ENCODE measurements at regions of chr10 and their contacts with region 1.

Region 1: DNA sequence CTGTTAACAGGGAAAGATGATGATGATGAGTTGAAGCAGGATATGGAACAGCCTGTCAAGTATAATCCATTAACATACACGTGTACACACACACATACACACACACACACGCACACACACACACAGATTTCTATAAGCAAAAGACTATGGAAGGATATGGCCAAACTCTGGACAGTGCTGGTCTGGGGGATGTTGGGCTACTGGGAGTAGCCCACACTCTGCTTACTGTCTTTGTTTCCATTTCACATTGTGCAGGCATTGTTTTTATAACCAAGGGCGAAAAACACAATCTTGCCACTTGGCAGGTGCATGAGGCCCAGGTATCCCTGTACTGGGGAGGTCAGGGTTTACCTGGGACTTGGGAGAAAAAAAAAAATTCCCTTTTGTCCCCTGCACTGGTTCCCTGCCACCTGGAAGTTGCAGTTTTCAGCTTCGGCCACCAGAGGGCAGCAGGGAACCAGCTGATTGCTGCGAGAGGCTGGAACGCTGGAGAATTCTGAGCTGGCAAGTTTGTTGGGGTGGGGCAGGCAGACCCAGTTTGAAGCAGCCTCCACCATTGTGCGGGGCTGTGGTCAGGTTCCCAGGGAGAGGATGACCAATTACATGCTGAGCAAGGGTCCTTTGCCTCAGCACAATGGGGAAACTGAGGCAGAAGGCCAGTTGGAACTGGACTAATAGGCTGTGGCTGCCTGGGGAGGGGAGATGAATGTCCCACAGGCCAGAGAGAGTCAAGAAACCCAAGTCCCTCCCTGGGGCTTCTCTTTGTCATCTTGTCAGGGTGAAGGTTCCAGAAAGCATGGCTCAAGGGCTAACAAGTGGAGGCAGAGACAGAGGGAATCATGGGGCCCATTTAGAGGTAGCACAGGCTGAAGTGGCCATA is 27.3 kb downstream of the PPIF start:
- DNase-seq: peak; percentile 54 to 88 (median 74)
- ATAC-seq: peak; percentile 83
- H3K4me3 ChIP-seq: no peak overlapping the region
- H3K4me3 Mint-ChIP-seq: no peak overlapping the region
- H3K27ac ChIP-seq: no peak overlapping the region
- H3K27ac Mint-ChIP-seq: peak overlapping the region; percentile 7
- H3K4me1 ChIP-seq: no peaks in the 10 kb centered on the region
- H3K4me1 Mint-ChIP-seq: peaks cover 5% of the 10 kb centered on the region
- H3K27me3 ChIP-seq: no peaks in the 10 kb centered on the region
- H3K27me3 Mint-ChIP-seq: no peaks in the 10 kb centered on the region
- CTCF ChIP-seq: peak; percentile 98

Region 2: DNA sequence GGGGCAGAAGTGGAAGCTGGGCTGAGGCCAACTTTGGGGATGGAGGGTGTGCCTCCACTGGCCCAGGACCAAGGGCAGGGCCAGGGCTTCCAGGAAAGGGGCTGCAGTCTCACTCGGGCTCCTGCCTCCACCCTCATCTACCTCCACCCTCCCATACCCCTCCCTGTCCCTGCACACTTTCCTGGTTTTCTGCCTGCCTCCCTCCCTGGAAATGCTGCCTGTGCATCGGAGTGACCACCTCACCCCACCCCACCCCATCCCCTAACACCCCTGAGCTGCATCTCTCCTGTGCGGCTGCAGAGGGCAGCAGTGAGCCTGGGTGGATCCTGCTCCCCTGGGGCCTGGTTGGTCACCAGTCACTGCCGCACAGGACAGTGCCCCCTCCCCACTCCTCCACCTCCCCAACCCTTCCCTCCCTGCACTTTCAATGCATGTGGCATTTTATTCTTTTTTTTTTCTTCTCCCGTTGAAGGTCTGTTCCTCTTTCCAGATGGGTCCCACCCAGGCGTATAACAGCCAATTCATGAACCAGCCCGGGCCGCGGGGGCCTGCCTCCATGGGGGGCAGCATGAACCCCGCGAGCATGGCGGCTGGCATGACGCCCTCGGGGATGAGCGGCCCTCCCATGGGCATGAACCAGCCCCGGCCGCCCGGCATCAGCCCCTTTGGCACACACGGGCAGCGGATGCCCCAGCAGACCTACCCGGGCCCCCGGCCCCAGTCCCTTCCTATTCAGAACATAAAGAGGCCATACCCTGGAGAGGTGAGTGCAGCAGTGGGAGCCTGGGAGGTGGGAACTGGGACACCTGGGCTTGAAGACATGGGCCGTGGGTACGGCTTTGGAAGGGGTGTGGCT is 81.4 kb before region 1 on chr10:
- CTCF ChIA-PET with region 1: interaction called, 6 read pairs
- POLR2A ChIA-PET with region 1: no interaction called
- intact Hi-C with region 1: loop called in 1 of 2 experiments (anchors 1 kb)
- DNase-seq: peak in 5 of 9 experiments; percentile 26 to 60 (median 47)
- ATAC-seq: peak; percentile 68
- H3K4me3 ChIP-seq: no peak overlapping the region
- H3K4me3 Mint-ChIP-seq: no peak overlapping the region
- H3K27ac ChIP-seq: no peak overlapping the region
- H3K27ac Mint-ChIP-seq: no peak overlapping the region
- H3K4me1 ChIP-seq: no peaks in the 10 kb centered on the region
- H3K4me1 Mint-ChIP-seq: no peaks in the 10 kb centered on the region
- H3K27me3 ChIP-seq: no peaks in the 10 kb centered on the region
- H3K27me3 Mint-ChIP-seq: no peaks in the 10 kb centered on the region
- CTCF ChIP-seq: peak; percentile 33

Region 3: DNA sequence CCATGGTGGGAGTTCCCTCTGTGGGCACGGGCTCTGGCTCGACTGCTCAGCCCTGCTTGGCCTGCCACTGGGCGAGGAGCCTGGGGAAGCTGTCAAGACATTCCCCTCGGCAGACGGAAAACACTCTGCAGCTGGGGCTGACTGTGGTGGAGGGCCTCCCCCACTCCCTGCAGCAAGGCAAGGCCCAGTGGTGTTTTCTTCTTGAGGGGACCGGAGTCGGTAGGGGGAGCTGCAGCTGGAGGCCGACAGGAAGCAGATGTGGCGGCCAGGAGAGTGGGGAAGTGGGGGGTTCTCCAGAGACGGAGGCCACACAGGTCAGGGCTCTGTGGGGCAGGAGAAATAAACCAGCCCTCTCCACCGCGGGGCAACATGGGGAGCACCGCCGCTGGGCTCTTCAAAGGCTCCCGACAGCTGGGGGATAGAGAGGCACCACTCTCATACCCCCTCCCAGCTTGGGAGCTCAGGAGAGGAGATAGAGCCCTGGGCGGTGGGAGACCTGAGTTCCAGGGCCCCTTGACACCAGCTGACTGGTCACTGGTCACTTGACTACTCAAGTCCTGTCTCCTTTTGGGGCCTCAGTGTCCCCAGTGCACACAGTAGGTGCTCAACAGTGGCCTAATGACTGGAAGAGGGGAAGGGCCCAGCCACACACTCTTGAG is 16.1 kb after region 1 on chr10:
- CTCF ChIA-PET with region 1: interaction called, 10 read pairs
- POLR2A ChIA-PET with region 1: no interaction called
- intact Hi-C with region 1: no loop called
- DNase-seq: no peak
- ATAC-seq: no peak
- H3K4me3 ChIP-seq: no peak overlapping the region
- H3K4me3 Mint-ChIP-seq: no peak overlapping the region
- H3K27ac ChIP-seq: no peak overlapping the region
- H3K27ac Mint-ChIP-seq: no peak overlapping the region
- H3K4me1 ChIP-seq: no peaks in the 10 kb centered on the region
- H3K4me1 Mint-ChIP-seq: no peaks in the 10 kb centered on the region
- H3K27me3 ChIP-seq: no peaks in the 10 kb centered on the region
- H3K27me3 Mint-ChIP-seq: no peaks in the 10 kb centered on the region
- CTCF ChIP-seq: no peak

Region 4: GRCh38 chr10:79472951-79473350 is 98.4 kb after region 1 on chr10:
- CTCF ChIA-PET with region 1: interaction called, 83 read pairs
- POLR2A ChIA-PET with region 1: no interaction called
- intact Hi-C with region 1: no loop called
- DNase-seq: no peak
- ATAC-seq: no peak
- H3K4me3 ChIP-seq: no peak overlapping the region
- H3K4me3 Mint-ChIP-seq: no peak overlapping the region
- H3K27ac ChIP-seq: no peak overlapping the region
- H3K27ac Mint-ChIP-seq: no peak overlapping the region
- H3K4me1 ChIP-seq: no peaks in the 10 kb centered on the region
- H3K4me1 Mint-ChIP-seq: no peaks in the 10 kb centered on the region
- H3K27me3 ChIP-seq: peaks cover 0 to 2% of the 10 kb centered on the region in 2 experiments
- H3K27me3 Mint-ChIP-seq: peaks cover 14% of the 10 kb centered on the region
- CTCF ChIP-seq: no peak

Region 5: DNA sequence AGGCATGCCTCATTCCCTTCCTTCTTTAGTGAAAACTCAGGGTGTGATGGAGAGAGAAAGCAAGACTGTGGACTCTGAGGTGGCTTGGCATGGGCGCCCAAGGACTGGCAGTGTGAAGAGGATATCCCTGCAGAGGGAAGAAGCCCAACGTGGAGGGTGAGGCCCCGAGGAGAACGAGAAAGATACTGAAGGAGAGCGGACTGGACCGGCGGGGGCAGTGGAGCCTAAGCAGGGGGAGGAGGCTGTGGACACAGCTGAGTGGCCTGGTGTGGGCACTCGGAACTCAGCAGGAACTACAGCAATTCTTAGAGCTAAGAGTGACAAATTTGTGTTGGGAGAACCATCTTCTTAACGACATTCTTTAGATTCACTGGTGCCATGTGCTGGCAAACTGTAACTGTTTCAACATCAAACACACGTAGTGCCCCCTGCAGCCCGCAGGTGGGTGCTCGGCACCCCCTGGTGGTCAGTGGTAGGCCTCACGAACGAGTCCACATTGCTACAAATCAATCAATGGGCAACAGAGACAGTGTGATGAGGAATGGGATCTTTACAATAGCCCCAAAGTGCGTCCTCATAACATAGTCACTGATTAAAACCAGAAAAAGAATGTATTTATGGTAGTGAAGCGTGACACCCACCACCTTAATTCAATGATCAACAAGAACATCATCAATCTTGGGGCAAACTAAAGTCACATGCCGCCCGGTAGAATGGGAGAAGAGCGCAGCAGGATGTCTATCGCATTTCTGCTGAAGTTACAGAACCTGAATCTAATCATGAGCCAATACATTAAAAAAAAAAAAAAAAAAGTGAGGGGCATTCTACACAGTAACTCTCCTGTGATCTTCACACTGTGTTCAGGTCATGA is 234.2 kb after region 1 on chr10:
- CTCF ChIA-PET with region 1: no interaction called
- POLR2A ChIA-PET with region 1: no interaction called
- intact Hi-C with region 1: loop called in 1 of 2 experiments (anchors 2 kb)
- DNase-seq: peak in 3 of 9 experiments; percentile 29 to 38 (median 36)
- ATAC-seq: no peak
- H3K4me3 ChIP-seq: no peak overlapping the region
- H3K4me3 Mint-ChIP-seq: no peak overlapping the region
- H3K27ac ChIP-seq: no peak overlapping the region
- H3K27ac Mint-ChIP-seq: no peak overlapping the region
- H3K4me1 ChIP-seq: no peaks in the 10 kb centered on the region
- H3K4me1 Mint-ChIP-seq: no peaks in the 10 kb centered on the region
- H3K27me3 ChIP-seq: no peaks in the 10 kb centered on the region
- H3K27me3 Mint-ChIP-seq: no peaks in the 10 kb centered on the region
- CTCF ChIP-seq: peak; percentile 33

Region 6: DNA sequence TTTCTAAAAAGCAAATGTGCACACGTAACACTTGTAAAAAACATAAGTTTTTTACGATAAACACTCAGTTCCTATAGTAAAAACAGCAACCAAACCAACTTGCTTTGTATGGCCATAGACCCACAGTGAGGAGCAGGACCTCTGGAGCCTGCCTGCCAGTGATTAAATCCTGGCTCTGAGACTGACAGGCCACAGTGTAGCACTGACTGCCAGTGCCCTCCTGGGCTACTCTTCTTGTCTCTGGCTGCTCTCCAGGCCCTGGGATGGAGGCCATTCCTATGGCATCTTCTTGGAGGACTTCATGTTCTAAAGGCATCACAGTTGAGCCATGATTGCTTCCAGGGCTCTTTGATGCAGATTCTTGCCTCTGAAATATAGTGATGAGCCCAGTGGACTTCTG is 681.2 kb after region 1 on chr10:
- CTCF ChIA-PET with region 1: no interaction called
- POLR2A ChIA-PET with region 1: no interaction called
- intact Hi-C with region 1: loop called in 1 of 2 experiments (anchors 10 kb)
- DNase-seq: no peak
- ATAC-seq: no peak
- H3K4me3 ChIP-seq: no peak overlapping the region
- H3K4me3 Mint-ChIP-seq: no peak overlapping the region
- H3K27ac ChIP-seq: no peak overlapping the region
- H3K27ac Mint-ChIP-seq: no peak overlapping the region
- H3K4me1 ChIP-seq: no peaks in the 10 kb centered on the region
- H3K4me1 Mint-ChIP-seq: no peaks in the 10 kb centered on the region
- H3K27me3 ChIP-seq: no peaks in the 10 kb centered on the region
- H3K27me3 Mint-ChIP-seq: no peaks in the 10 kb centered on the region
- CTCF ChIP-seq: no peak